ENCODE measurements at regions of chr15 and their contacts with region 1.

Region 1: DNA sequence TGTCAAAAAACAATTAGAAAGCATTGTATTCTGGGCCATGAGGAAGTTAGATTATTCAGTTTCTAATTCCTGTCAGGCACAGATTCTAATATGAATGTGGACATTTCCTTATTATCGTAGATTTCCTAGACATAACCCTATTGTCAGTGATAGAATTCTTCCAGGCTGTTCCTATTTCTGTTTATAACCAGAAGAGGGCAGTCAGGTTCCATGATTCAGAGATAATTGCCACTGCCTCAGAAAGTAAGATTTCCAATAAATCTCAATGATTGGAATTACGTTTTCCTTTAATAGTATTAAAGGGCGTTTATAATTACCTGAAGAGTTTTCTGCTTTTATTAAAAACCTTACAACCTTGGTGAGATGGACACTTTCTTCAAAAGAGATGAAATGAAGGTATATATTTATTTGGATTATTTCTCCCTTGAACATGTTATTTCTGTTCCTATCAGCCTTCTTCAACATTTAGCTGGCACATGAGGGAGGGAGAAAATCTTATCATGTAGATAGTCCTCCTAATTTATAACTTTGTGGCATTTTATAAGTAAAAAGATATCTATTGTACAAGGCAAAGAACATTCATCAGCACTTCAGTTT is 439.2 kb downstream of the MCTP2 start:
- DNase-seq: no peak
- H3K4me3 ChIP-seq: no peak overlapping the region
- H3K27ac ChIP-seq: no peak overlapping the region
- H3K4me1 ChIP-seq: no peaks in the 10 kb centered on the region
- H3K27me3 ChIP-seq: no peaks in the 10 kb centered on the region
- CTCF ChIP-seq: peak; percentile 55

Region 2: GRCh38 chr15:94412979-94413746 is 257.4 kb before region 1 on chr15:
- intact Hi-C with region 1: loop called (anchors 10 kb)
- DNase-seq: peak; percentile 47
- H3K4me3 ChIP-seq: no peak overlapping the region
- H3K27ac ChIP-seq: no peak overlapping the region
- H3K4me1 ChIP-seq: no peaks in the 10 kb centered on the region
- H3K27me3 ChIP-seq: no peaks in the 10 kb centered on the region
- CTCF ChIP-seq: peak; percentile 34

Region 3: GRCh38 chr15:94620632-94621031 is 49.9 kb before region 1 on chr15:
- intact Hi-C with region 1: no loop called
- DNase-seq: no peak
- H3K4me3 ChIP-seq: no peak overlapping the region
- H3K27ac ChIP-seq: no peak overlapping the region
- H3K4me1 ChIP-seq: no peaks in the 10 kb centered on the region
- H3K27me3 ChIP-seq: no peaks in the 10 kb centered on the region
- CTCF ChIP-seq: no peak

Region 4: GRCh38 chr15:95291898-95292472 is 621.4 kb after region 1 on chr15:
- intact Hi-C with region 1: loop called (anchors 2 kb)
- DNase-seq: no peak
- H3K4me3 ChIP-seq: no peak overlapping the region
- H3K27ac ChIP-seq: no peak overlapping the region
- H3K4me1 ChIP-seq: no peaks in the 10 kb centered on the region
- H3K27me3 ChIP-seq: no peaks in the 10 kb centered on the region
- CTCF ChIP-seq: peak; percentile 65